A549 (cell line): ENCODE measurements at regions of chr5 and their contacts with region 1.

Region 1: GRCh38 chr5:94740286-94740685 is 121.8 kb downstream of the SLF1 start:
- DNase-seq: no peak
- ATAC-seq: no peak
- H3K4me3 ChIP-seq: no peak overlapping the region
- H3K27ac ChIP-seq: no peak overlapping the region
- H3K4me1 ChIP-seq: no peaks in the 10 kb centered on the region
- CTCF ChIP-seq: no peak
- EP300 ChIP-seq: no peak
- POLR2A ChIP-seq: no peak
- RAD21 ChIP-seq: no peak

Region 2: GRCh38 chr5:94503677-94504076 is 236.6 kb before region 1 on chr5:
- CTCF ChIA-PET with region 1: no interaction called
- POLR2A ChIA-PET with region 1: no interaction called
- DNase-seq: no peak
- ATAC-seq: no peak
- H3K4me3 ChIP-seq: no peak overlapping the region
- H3K27ac ChIP-seq: no peak overlapping the region
- H3K4me1 ChIP-seq: no peaks in the 10 kb centered on the region
- CTCF ChIP-seq: no peak
- EP300 ChIP-seq: no peak
- POLR2A ChIP-seq: no peak
- RAD21 ChIP-seq: no peak

Region 3: DNA sequence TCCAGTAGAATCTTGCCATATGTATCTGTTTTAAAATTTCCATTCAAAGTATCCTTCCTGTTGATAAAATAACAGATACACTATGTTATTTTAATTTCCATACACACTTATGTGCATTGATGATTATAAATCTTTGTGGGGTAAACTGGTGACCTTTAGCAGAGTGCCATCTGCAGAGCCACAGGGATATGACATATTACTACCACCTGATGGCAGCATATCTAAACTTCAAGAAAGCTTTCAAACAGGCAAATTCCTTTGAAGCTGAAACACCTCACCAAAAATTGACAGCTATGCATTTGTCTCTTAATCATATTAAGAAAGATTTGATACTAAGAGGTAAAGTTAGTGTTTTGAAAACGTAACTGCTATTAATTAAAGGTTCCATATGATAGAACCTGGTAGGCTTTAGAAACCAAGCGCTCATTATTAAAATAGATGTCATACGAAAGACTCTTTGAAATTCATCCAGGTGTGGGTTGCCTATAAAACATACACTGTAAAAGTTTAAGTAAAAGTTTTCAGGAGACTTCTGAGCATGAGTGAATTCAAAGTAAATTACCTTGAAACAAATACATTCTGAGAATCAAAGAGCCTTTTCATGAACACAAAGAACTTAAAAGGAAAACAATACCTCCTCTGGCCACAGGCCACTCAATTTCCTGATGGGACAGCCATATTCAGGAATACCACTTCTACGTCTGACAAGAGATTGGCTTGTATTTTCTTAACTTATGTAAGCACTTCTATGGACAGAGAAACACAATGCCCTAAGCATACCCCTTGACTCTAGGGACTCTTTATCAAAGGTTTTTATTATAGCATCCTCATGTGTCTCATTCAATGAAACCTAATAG is 215.2 kb before region 1 on chr5:
- CTCF ChIA-PET with region 1: interaction called, 11 read pairs
- POLR2A ChIA-PET with region 1: no interaction called
- DNase-seq: peak; percentile 7 to 53
- ATAC-seq: peak; percentile 84 to 87
- H3K4me3 ChIP-seq: no peak overlapping the region
- H3K27ac ChIP-seq: no peak overlapping the region
- H3K4me1 ChIP-seq: 0 out of 3 replicates have a peak, but pooled peaks cover 4% of the 10 kb centered on the region
- CTCF ChIP-seq: peak; percentile 68
- EP300 ChIP-seq: no peak
- POLR2A ChIP-seq: no peak
- RAD21 ChIP-seq: peak; percentile 68 to 69

Region 4: DNA sequence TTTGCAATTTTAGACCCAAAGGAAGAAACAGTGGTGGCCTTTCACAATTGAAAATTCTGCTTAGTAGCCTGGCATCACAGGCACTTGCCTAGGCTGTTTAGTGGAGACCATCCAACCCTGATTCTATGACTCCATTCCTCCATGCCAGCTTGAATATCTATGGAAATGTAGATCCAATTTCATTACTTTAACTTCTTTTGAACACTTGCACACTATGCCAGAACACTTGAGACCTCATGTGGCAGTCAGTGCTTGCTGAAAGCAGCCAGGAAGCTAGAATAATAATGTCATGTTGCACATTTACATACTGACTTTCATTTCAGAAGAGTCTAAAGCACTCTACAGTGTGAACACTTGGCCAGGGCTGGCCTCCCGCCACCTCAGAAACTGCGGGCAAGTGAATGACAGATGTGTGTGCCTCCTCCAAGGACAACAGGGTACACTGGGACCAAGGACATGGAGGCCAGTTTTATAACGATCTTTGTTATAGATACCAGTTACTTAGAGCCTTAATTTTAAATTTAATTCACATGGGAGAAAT is 24.5 kb before region 1 on chr5:
- CTCF ChIA-PET with region 1: interaction called, 10 read pairs
- POLR2A ChIA-PET with region 1: no interaction called
- DNase-seq: no peak
- ATAC-seq: no peak
- H3K4me3 ChIP-seq: no peak overlapping the region
- H3K27ac ChIP-seq: no peak overlapping the region
- H3K4me1 ChIP-seq: no peaks in the 10 kb centered on the region
- CTCF ChIP-seq: no peak
- EP300 ChIP-seq: no peak
- POLR2A ChIP-seq: no peak
- RAD21 ChIP-seq: no peak

Region 5: GRCh38 chr5:94725142-94725541 is 15.1 kb before region 1 on chr5:
- CTCF ChIA-PET with region 1: interaction called, 11 read pairs
- POLR2A ChIA-PET with region 1: no interaction called
- DNase-seq: no peak
- ATAC-seq: no peak
- H3K4me3 ChIP-seq: no peak overlapping the region
- H3K27ac ChIP-seq: no peak overlapping the region
- H3K4me1 ChIP-seq: no peaks in the 10 kb centered on the region
- CTCF ChIP-seq: no peak
- EP300 ChIP-seq: no peak
- POLR2A ChIP-seq: no peak
- RAD21 ChIP-seq: no peak

Region 6: DNA sequence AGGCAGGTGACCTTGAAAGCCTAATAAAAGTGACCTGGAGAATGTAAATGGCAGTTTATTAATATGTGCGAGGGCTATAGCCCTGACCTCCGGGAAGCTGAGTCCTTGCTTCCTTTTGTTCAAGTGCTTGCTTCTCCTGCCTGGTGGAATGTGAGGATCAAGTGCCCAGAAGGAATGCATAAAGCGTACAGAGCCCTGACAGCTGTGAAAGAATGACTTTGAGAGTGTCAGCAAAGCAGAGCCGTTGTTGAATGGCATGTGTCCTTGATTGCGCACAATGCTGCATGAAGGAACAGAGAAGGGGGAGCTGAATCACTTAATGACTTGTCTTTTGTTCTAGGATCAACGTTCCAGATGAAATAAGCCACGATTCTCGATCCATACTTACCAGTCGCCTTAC is 11.2 kb after region 1 on chr5:
- CTCF ChIA-PET with region 1: interaction called, 14 read pairs
- POLR2A ChIA-PET with region 1: no interaction called
- DNase-seq: no peak
- ATAC-seq: no peak
- H3K4me3 ChIP-seq: no peak overlapping the region
- H3K27ac ChIP-seq: no peak overlapping the region
- H3K4me1 ChIP-seq: peaks cover 3% of the 10 kb centered on the region; the same call in 1 of the 3 replicates
- CTCF ChIP-seq: no peak
- EP300 ChIP-seq: no peak
- POLR2A ChIP-seq: no peak
- RAD21 ChIP-seq: no peak

Region 7: DNA sequence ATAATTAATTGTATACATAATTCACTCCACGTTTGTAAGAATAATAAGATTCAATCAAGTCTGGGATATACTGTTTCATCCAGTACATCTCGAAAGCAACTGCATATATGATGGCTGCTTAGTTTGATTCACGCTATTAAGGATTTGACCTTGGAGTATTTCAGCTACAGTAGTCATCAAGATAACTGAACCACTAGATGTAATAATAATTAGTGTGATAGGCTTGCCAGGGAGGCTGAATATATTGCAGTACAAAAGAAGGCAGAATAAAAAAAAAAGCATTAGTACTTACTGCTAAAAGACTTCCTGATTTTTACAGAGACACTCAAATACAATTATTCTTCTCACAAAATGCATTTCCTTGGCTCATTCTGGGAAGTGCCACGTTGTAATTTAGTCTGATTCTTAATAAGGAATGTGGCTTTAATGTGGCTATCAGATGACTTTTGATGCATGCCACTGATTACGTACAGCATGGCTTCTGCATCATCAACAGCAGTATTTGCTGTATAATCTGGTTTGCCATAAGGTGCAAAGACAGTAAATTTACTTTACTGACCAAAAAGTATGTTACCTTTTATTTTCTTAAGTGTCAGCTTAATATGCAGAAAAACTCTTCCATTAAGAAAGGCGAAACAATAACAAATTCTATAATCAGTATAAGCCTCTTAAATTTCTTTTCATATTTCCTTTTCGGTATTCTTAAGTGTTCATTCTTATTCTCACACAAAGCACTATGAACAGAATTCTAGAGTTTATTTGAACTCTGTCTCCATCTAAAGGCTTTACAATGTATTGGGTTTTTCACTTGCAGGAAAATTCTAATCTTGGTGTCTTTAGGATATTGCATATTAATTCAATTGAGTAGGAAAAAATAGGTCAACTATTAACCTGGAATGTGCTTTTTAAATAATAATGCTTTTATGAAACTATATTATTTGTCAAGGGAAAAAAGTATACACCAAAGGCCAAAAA is 44.5 kb after region 1 on chr5:
- CTCF ChIA-PET with region 1: no interaction called
- POLR2A ChIA-PET with region 1: no interaction called
- DNase-seq: no peak
- ATAC-seq: no peak
- H3K4me3 ChIP-seq: no peak overlapping the region
- H3K27ac ChIP-seq: no peak overlapping the region
- H3K4me1 ChIP-seq: no peaks in the 10 kb centered on the region
- CTCF ChIP-seq: no peak
- EP300 ChIP-seq: no peak
- POLR2A ChIP-seq: no peak
- RAD21 ChIP-seq: peak in 1 of 2 experiments; percentile 24; a peak in 2 of 5 replicates